Activated naive CD4-positive, alpha-beta T cell treated with anti-CD3 and anti-CD28 coated beads for 36 hours (primary cell): ENCODE measurements at regions of chr4 and their contacts with region 1.

Region 1: DNA sequence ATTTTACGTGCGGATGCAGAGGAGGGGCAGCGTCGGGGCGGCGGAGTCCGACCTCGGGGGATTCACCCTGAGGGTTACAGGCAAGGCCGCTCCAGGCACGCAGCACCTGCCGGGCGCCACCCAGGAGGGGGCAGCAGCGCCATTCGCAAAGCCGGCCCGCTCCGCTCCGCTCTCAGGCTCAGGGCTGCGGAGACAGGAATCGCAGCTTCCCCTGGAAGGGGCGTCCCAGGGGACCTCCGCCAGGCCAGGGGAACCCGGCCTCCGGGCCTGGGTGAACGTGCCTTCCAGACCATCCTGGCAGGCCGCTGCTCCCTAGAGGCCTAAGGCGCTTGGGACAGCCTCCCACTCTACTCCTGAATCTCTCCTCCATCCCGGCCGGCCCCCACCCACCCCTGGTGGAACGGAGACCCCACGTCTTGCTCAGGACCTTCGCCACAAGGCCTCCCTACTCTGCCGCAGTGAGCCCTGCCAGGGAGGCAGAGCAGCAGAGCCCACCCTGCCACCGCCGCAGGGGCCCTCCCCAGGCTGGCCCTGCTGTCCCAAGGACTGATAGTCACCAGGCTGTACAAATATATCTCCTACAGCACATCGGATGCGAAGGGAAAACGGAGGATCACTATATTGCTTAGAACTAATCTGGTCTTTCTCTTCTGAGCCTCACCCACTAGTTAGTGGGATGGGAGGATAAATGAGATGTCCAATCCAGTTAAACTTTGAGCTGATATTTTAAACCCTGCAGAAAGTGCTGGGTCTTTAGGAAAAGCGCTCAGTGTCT is 115.0 kb downstream of the SMIM20 start:
- DNase-seq: peak; percentile 80
- H3K4me3 Mint-ChIP-seq: no peak overlapping the region
- H3K27ac Mint-ChIP-seq: no peak overlapping the region
- H3K4me1 Mint-ChIP-seq: peaks cover 12% of the 10 kb centered on the region
- H3K27me3 Mint-ChIP-seq: peaks cover 16% of the 10 kb centered on the region

Region 2: DNA sequence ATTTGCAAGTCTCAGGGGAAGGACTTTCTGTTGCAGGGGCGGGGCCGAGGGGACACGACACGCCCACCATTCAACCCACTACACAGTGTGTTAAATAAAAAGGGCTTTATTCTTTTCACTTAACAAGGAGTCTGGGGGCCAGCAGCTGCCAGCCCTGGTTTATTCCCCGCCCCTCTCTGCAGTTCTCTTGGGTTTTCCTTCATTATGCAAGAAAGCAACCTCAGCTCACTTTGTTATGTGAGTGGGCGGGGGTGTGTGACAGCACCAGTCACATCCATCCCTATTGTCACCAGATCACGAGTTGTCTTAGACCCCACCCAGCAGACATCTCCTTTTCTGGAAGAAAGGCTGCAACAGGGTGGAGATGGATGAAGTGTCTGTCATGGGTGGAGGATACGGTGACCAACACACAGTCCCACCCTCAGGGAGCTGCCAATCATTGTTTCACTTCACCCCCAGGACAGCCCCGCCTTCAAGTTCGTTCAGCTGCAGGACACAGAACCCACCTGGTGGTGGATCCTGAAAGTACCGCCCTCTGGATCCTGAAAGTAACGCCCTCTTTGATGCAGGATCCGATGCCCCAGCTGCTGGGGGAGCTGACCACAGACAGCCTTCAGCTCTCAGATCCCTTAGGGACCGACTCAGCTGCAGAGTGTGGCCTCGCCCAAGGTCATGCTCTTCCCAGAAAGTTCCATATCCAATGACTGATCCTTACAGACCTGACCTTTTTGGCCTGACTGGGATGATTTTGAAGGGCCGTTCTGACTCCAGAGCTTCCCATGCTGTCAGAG is 35.4 kb before region 1 on chr4:
- CTCF ChIA-PET with region 1: interaction called, 11 read pairs
- intact Hi-C with region 1: loop called (anchors 2 kb)
- DNase-seq: peak; percentile 34
- H3K4me3 Mint-ChIP-seq: no peak overlapping the region
- H3K27ac Mint-ChIP-seq: no peak overlapping the region
- H3K4me1 Mint-ChIP-seq: peaks cover 7% of the 10 kb centered on the region
- H3K27me3 Mint-ChIP-seq: no peaks in the 10 kb centered on the region

Region 3: GRCh38 chr4:26088433-26088928 is 59.5 kb after region 1 on chr4:
- CTCF ChIA-PET with region 1: interaction called, 3 read pairs
- intact Hi-C with region 1: loop called (anchors 2 kb)
- DNase-seq: peak; percentile 75
- H3K4me3 Mint-ChIP-seq: peak overlapping the region; percentile 19
- H3K27ac Mint-ChIP-seq: peak overlapping the region; percentile 93
- H3K4me1 Mint-ChIP-seq: peaks cover 47% of the 10 kb centered on the region
- H3K27me3 Mint-ChIP-seq: peaks cover 6% of the 10 kb centered on the region

Region 4: DNA sequence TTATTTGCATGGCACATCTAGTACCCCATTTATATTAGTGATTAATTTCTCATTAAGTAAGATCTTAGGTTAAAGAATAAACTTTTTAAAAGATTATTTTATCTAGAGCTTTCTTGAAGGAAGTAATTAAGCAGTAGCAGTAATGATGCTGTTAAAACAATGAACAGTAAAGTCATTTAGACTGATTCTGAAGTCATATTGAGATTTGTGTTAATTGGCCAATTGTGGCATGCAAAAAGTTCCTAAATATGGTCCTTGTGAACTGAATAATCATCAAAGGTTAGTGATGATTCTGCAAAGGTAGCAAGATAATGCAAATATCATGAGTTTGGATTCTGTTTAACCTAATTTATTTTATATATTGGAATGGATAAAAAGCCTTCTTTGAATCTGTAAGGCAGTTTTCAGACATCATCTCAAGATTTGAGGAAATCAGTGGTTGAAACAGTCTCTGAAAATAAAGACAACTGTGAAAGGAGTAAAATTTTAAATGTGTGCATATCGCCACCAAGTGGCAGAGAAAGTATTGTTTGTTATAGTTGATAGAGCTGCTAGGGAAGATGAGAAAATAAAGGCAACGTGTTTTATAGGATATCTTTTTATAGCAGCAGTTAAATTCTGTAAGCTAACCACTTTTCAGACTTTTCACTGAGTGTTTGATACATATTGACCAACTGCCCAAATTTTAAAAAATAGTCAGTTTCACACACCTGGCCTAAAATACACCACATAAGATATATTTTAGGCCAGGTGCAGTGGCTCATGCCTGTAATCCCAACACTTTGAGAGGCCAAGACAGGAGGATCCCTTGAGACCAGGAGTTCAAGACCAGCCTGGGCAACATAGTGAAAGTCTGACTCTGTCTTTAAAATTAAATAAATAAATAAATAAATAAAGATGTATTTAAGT is 381.7 kb after region 1 on chr4:
- CTCF ChIA-PET with region 1: interaction called, 10 read pairs
- intact Hi-C with region 1: loop called (anchors 1 kb)
- DNase-seq: peak; percentile 49
- H3K4me3 Mint-ChIP-seq: no peak overlapping the region
- H3K27ac Mint-ChIP-seq: no peak overlapping the region
- H3K4me1 Mint-ChIP-seq: peaks cover 5% of the 10 kb centered on the region
- H3K27me3 Mint-ChIP-seq: no peaks in the 10 kb centered on the region

Region 5: DNA sequence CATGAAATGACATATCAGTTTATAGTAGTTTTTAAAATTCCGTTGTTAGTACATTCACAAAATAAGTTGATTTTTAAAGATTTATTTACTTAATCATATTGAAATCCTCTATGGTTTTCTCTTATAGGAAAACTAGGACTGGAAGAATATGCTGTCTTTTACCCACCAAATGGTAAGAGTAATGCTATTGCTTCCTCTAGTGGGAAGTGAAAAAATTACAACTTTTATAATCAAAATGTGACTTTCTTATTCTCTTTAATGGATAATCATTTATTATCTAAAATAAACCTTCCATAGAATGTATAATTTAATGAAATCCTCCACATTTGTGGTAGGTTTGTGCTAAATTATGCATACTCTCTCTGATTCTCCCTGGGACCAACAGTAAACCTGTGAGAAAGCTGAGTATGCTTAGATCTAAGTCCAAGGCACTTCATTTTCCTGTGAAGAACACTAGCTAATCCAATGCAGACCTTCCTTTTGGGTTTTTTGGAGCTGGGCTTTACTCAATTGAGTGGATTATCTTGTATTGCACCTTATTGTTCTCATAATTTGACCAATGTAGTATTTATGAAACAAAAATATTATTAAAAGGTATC is 691.1 kb after region 1 on chr4:
- CTCF ChIA-PET with region 1: interaction called, 3 read pairs
- intact Hi-C with region 1: loop called (anchors 5 kb)
- DNase-seq: no peak
- H3K4me3 Mint-ChIP-seq: no peak overlapping the region
- H3K27ac Mint-ChIP-seq: no peak overlapping the region
- H3K4me1 Mint-ChIP-seq: peaks cover 10% of the 10 kb centered on the region
- H3K27me3 Mint-ChIP-seq: no peaks in the 10 kb centered on the region